Posterior cingulate gyrus (tissue), 11 donors: ENCODE measurements at regions of chr14 and their contacts with region 1.

Region 1: DNA sequence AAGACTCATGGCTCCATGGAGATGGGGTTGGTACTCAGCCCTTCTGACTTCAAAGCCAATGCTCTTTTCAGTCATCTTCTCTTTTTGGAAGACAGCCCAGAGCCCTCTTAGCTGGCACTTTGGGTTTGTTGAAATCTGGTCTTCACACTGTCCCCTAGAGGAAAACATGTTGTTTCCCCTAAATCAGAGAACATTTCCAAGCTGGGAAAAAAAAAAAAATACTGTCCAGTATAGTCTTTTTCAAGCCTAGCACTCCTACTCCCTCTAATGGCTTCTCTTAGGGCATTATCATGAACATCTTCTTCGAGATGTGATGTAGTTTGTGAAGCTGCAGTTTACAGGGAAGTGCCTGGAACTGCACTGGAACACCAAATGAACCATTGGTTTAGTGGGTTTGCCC is 3.0 kb upstream of the ZC3H14 start:
- DNase-seq: no peak

Region 2: DNA sequence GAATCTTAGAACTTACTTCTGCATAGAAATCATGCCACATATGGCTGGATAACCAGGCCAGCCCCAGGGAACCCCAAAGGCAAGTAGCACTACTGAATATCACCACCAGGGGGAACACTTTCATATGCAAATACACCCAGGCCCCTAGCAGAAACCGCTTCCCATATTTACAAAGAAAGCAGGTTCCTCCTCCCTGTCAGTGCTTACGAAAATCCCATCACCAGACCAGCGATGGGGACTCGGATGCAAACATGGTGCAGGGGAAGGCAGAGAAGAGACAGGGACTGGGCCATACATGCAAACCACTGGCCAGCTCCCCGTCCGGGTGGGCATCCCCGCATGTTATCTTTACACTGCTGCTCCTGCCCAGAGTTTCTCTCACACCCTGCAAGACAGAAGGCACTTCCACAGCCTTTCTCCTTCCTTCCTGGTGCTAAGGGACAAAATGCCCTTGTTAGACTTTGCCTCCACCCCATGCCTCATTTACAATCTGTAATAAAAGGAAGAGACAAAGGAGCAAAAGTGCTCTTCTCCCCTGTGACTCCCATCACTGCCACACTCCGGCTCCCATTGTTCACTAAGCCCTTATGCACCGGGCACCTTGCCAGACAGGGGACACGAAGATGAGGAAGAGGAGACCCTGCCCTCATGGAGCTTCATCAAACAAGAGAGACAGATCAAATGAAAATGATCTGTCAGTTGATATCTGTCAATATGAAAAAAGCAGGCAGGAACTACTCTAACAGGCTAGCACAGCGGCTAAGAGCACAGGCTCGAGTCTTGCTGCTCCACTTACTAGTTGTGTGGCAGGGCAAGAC is 67.4 kb before region 1 on chr14:
- intact Hi-C with region 1: loop called (anchors 2 kb)
- DNase-seq: peak in 5 of 10 donors; percentile 31 to 88 (median 50)